ENCODE measurements at regions of chr17 and their contacts with region 1.

Region 1: DNA sequence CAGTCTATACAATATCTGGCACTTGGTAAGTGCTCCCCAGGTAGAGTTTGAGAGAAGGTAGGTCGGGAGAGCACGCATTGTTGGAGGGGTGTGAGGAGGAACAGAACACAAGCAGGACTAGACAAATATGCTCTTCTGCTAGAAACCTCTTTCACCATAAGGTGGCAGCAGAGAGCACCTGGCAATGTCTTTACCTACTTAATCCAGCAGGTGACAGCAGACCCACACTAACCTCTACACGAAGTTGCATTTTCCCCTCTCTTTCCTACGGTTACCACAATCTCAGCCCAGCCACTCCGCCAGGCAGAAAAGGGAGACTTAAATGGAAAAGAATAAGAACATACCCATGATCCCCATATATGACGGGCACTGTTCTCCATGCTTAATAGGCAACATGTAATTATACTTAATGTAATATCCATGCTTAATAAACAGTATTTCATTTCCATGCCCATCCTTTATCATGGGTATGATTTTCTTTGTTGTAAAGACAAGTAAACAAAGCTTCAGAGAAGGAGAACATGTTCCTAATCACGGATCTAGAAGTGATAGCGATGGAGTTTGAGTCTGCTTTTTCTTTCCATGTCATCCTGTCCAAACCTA is 55.1 kb upstream of the CCL2 start:
- DNase-seq: peak; percentile 91
- H3K4me3 ChIP-seq: no peak overlapping the region
- H3K27ac ChIP-seq: no peak overlapping the region
- H3K4me1 ChIP-seq: peaks cover 0 to 9% (median 6%) of the 10 kb centered on the region in 4 donors
- H3K27me3 ChIP-seq: peaks cover 0 to 13% (median 0%) of the 10 kb centered on the region in 3 donors
- CTCF ChIP-seq: peak; percentile 100
- EP300 ChIP-seq: no peak
- POLR2A ChIP-seq: no peak

Region 2: GRCh38 chr17:34163646-34164045 is 36.4 kb before region 1 on chr17:
- intact Hi-C with region 1: no loop called
- DNase-seq: no peak
- H3K4me3 ChIP-seq: no peak overlapping the region
- H3K27ac ChIP-seq: no peak overlapping the region
- H3K4me1 ChIP-seq: peaks cover 0 to 5% (median 0%) of the 10 kb centered on the region in 4 donors
- H3K27me3 ChIP-seq: peaks cover 0 to 54% (median 0%) of the 10 kb centered on the region in 3 donors
- CTCF ChIP-seq: peak in 2 of 4 experiments; percentile 17 to 20
- EP300 ChIP-seq: no peak
- POLR2A ChIP-seq: no peak

Region 3: DNA sequence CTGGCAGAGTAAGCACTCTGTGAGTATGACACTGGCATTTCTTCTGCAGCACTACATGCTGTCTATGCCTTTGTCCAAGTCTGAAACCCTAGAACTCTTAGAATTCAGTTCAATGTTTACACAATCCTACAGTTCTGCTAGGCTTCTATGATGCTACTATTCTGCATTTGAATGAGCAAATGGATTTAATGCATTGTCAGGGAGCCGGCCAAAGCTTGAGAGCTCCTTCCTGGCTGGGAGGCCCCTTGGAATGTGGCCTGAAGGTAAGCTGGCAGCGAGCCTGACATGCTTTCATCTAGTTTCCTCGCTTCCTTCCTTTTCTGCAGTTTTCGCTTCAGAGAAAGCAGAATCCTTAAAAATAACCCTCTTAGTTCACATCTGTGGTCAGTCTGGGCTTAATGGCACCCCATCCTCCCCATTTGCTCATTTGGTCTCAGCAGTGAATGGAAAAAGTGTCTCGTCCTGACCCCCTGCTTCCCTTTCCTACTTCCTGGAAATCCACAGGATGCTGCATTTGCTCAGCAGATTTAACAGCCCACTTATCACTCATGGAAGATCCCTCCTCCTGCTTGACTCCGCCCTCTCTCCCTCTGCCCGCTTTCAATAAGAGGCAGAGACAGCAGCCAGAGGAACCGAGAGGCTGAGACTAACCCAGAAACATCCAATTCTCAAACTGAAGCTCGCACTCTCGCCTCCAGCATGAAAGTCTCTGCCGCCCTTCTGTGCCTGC is 54.8 kb after region 1 on chr17 and contains the start of gene CCL2:
- intact Hi-C with region 1: loop called (anchors 1 kb)
- DNase-seq: peak; percentile 92
- H3K4me3 ChIP-seq: peak within 1 kb of the TSS; percentile 19 to 50 (median 42)
- H3K27ac ChIP-seq: peak within 1 kb of the TSS; percentile 80 to 92 (median 84)
- H3K4me1 ChIP-seq: peaks cover 0 to 71% (median 62%) of the 10 kb centered on the region in 4 donors
- H3K27me3 ChIP-seq: no peaks in the 10 kb centered on the region
- CTCF ChIP-seq: no peak
- EP300 ChIP-seq: peak in 1 of 4 donors; percentile 22
- POLR2A ChIP-seq: peak in 1 of 2 donors; percentile 20
- total RNA-seq, gene CCL2: 27.6 to 862 (median 38.6) TPM

Region 4: DNA sequence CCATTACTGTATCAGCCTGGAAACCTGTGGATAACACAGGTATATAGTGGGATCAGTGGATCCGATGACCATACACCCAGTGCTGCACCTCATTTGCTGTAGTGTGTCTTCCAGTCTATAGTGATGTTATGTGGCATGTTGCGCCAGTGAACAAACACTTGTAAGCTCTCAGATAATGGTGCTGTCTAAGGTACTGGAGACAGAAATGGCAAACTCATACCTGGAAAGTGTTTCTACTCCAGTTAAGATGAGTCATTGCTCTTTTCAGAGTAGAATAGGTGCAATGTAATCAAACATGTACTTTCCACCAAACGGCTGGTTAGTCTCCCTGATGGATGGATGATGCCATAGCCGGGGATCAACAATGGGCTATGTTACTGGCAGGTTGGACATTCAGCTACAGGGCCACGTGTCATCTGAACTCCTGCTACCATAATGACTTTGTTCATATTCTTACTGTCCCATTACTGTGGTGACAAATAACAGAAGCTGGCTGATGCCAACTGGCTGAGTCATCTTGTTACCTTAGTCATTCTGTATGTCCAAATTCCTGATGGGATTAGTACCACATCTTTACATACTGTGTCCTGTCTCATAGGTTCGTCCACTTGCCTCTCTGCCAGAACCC is 91.8 kb after region 1 on chr17:
- intact Hi-C with region 1: no loop called
- DNase-seq: no peak
- H3K4me3 ChIP-seq: no peak overlapping the region
- H3K27ac ChIP-seq: no peak overlapping the region
- H3K4me1 ChIP-seq: no peaks in the 10 kb centered on the region
- H3K27me3 ChIP-seq: no peaks in the 10 kb centered on the region
- CTCF ChIP-seq: no peak
- EP300 ChIP-seq: no peak
- POLR2A ChIP-seq: no peak

Region 5: DNA sequence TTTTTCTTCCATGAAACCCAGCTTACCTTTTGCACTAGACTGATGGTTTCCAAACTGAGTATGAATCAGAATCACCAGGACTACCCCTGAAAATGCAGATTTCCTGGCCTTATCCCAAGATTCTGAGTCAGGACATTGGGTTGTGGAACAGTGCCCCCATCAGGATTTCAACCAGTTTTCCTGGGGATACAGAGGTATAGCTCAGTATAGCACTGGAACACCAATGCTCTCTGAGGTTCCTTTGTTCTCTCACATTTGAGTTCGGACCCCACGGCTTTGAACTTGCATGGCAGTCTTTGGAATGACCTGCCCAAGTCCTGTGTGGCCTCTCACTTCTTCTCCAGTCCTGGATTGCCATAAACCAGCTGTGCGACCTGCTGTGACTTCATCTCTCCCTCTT is 106.4 kb after region 1 on chr17:
- intact Hi-C with region 1: loop called (anchors 2 kb)
- DNase-seq: no peak
- H3K4me3 ChIP-seq: no peak overlapping the region
- H3K27ac ChIP-seq: no peak overlapping the region
- H3K4me1 ChIP-seq: peaks cover 0 to 22% (median 15%) of the 10 kb centered on the region in 4 donors
- H3K27me3 ChIP-seq: no peaks in the 10 kb centered on the region
- CTCF ChIP-seq: peak in 3 of 4 experiments; percentile 13 to 52 (median 40)
- EP300 ChIP-seq: no peak
- POLR2A ChIP-seq: no peak

Region 6: DNA sequence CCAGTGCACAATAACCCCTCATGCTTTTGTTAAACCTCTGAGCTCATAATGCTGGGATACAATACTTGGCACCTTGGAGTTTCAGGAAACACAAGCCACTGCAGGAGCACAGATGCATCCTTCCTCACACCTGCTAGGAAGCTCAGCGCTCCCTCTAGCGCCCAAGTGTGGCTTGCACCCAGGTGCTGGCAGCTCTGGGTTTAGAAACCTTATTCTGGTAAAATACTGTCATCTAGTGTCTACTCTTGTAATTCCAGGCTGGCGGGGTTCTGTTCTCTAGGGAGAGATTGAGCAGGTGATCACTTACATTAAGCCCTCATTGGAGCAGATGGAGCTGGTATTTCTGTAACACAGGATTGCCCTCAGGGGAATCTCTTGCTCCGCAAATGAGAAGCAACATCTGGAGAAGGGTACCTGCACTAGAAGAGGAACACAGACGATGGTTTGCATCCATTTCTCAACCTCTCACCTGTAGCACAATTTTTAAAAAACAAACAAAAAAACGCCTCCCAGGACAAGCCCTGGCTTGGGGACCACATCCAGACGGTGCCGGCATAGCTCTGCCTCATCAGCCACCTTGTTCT is 161.5 kb after region 1 on chr17:
- intact Hi-C with region 1: loop called (anchors 1 kb)
- DNase-seq: peak; percentile 94
- H3K4me3 ChIP-seq: no peak overlapping the region
- H3K27ac ChIP-seq: no peak overlapping the region
- H3K4me1 ChIP-seq: no peaks in the 10 kb centered on the region
- H3K27me3 ChIP-seq: peaks cover 0 to 7% (median 0%) of the 10 kb centered on the region in 3 donors
- CTCF ChIP-seq: peak; percentile 99 to 100 (median 99)
- EP300 ChIP-seq: no peak
- POLR2A ChIP-seq: no peak

Measured in sigmoid colon (tissue), 7 donors.